Head of caudate nucleus (tissue), 42 donors: ENCODE measurements at regions of chr3 and their contacts with region 1.

Region 1: GRCh38 chr3:72171463-72171881 is 386.5 kb upstream of the PROK2 start:
- DNase-seq: peak in 36 of 42 donors; percentile 39 to 86 (median 61)

Region 2: DNA sequence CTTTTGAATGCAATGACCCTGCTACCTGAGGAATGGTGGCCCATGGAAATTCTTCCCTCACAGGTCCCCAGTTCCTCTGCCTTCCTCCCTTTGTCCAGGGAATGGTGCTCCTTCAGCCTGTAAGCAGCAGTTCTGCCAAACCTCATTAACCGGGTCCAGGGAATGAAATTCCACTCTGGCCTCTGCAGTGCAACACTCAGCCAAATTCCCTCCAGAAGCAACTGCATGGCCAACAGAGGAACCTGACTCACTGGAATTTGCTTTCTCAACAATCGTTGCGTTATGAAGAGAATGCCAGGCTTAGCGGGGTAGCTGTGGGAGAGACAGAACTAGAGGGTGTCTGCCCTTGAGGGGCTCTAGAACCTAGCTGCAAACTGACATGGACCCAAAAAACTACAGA is 62.9 kb after region 1 on chr3:
- intact Hi-C with region 1: loop called (anchors 5 kb)
- DNase-seq: peak in 3 of 42 donors; percentile 24 to 58 (median 33)